ENCODE measurements at regions of chr3 and their contacts with region 1.

Region 1: GRCh38 chr3:49171119-49171774 is at the start of gene KLHDC8B:
- DNase-seq: peak; percentile 44
- H3K4me3 ChIP-seq: peak within 1 kb of the TSS; percentile 80
- H3K27me3 ChIP-seq: no peaks in the 10 kb centered on the region
- CTCF ChIP-seq: peak; percentile 99
- polyA plus RNA-seq, gene KLHDC8B: 33.8 and 47.8 TPM in 2 replicates

Region 2: DNA sequence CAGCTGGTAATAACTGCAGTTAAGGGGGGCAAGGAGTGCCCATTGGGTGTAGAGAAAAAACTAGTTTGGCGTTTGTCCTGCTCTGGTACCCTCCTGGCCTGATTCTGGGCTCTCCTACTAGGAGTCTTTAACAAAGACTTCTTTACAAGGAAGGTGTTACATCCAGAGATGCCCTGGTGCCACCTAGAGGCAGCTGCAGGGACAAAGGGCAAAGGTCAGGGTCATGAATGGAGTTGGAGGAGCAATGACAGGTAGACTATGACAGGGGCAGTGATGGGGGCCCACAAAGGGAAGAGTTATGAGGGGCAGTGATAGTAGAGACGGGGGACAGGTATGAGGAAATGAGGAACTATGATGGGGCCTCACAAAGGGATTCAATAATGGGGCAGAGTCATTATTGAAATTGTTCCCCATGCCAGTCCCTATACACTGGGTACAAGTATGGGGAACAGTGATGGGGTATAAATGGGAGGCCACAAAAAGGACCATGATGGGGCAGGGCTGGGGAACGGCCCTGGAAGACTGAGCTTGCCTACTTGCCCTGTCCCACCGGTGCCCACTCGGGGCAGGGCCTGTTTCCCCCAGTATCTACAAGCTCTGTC is 13.0 kb before region 1 on chr3:
- CTCF ChIA-PET with region 1: interaction called, 18 read pairs
- POLR2A ChIA-PET with region 1: no interaction called
- DNase-seq: no peak
- H3K4me3 ChIP-seq: no peak overlapping the region
- H3K27me3 ChIP-seq: no peaks in the 10 kb centered on the region
- CTCF ChIP-seq: peak; percentile 30; the same call in 1 of the 2 replicates

Region 3: DNA sequence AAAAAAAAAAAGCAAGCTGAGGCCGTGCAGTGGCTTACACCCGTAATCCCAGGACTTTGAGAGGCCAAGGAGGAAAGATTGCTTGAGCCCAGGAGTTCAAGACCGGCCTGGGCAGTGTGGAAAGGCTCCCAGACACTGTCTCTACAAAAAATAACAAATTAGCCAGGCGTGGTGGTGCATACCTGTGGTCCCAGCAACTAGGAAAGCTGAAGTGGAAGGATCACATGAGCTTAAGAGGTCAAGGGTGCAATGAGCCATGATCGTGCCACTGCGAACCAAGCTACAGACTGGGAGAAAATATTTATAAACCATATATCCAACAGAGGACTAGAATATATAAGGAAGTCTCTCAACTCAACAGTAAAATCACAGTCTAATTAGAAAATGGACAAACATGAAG is 10.1 kb after region 1 on chr3:
- CTCF ChIA-PET with region 1: interaction called, 25 read pairs
- POLR2A ChIA-PET with region 1: no interaction called
- DNase-seq: no peak
- H3K4me3 ChIP-seq: no peak overlapping the region
- H3K27me3 ChIP-seq: no peaks in the 10 kb centered on the region
- CTCF ChIP-seq: no peak

Region 4: GRCh38 chr3:49454458-49454857 is 283.2 kb after region 1 on chr3:
- CTCF ChIA-PET with region 1: interaction called, 11 read pairs
- POLR2A ChIA-PET with region 1: no interaction called
- DNase-seq: no peak
- H3K4me3 ChIP-seq: no peak overlapping the region
- H3K27me3 ChIP-seq: no peaks in the 10 kb centered on the region
- CTCF ChIP-seq: peak; percentile 19; the same call in 1 of the 2 replicates

Measured in BJ (cell line).